Right ventricle myocardium inferior (tissue), 1 donor: ENCODE measurements at regions of chr17 and their contacts with region 1.

Region 1: GRCh38 chr17:50507871-50508572 is at the start of gene MYCBPAP:
- DNase-seq: peak; percentile 92
- ATAC-seq: peak; percentile 87
- total RNA-seq, gene MYCBPAP: 0.81 TPM

Region 2: GRCh38 chr17:50541716-50542688 is 34.0 kb after region 1 on chr17:
- intact Hi-C with region 1: loop called (anchors 2 kb)
- DNase-seq: peak; percentile 94
- ATAC-seq: peak; percentile 93

Region 3: GRCh38 chr17:50649042-50649904 is 141.3 kb after region 1 on chr17:
- intact Hi-C with region 1: no loop called
- DNase-seq: no peak
- ATAC-seq: no peak